ENCODE measurements at regions of chr17 and their contacts with region 1.

Region 1: GRCh38 chr17:64320613-64321553 is 57.8 kb upstream of the TEX2 start:
- DNase-seq: peak; percentile 65
- ATAC-seq: peak; percentile 83; the same call in 1 of the 2 replicates
- H3K4me3 ChIP-seq: no peak overlapping the region
- H3K27ac ChIP-seq: no peak overlapping the region
- H3K4me1 ChIP-seq: no peaks in the 10 kb centered on the region
- H3K27me3 ChIP-seq: peaks cover 44% of the 10 kb centered on the region
- CTCF ChIP-seq: peak; percentile 73
- POLR2A ChIP-seq: no peak
- RAD21 ChIP-seq: peak; percentile 78

Region 2: DNA sequence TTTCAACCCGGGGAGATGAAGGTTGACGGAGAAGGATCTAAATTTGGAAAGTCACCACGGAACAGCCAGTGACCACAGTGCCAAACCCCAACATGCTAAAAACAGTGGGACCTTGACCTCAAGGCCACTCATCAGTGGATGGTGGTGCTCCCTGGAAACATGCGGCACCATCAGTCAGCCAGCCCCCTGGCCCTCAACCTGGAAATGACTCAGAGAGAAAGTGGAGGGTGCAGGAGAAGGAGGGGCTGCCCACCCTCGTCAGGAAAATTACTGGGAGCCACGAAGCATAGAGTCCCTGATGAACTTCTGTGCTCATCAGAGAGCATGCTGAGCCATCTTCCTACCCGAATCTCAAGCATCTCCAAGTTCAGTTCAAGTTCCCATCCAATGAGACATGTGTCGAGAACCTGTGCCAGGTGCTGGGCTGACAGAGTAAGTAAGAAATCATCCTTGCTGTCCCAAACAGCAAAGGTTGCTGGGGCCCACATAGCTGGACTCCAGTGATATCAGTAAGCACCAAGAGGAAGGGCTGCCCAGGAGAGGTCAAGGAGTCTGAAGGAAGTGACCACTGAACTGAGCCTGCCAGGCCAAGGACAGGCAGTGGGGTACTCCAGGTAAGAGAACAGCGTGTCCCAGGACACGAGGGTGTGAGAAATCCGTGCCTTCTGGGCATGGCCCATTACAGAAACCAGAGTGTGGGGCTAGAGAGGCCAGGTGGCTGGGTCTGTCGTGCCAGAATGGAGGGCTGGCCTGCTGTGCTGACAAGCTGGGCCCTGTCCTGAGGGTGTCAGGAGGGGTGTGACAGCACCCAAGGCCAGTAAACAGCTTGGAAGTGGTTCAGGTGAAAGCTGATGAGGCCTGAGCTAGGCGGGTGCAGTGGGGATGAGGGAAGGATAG is 64.6 kb after region 1 on chr17:
- CTCF ChIA-PET with region 1: no interaction called
- POLR2A ChIA-PET with region 1: no interaction called
- dilution Hi-C with region 1: no loop called
- in situ Hi-C with region 1: no loop called
- intact Hi-C with region 1: no loop called
- DNase-seq: peak; percentile 88
- ATAC-seq: peak; percentile 87
- H3K4me3 ChIP-seq: no peak overlapping the region
- H3K27ac ChIP-seq: no peak overlapping the region; the same call in 1 of the 2 replicates
- H3K4me1 ChIP-seq: peaks cover 14% of the 10 kb centered on the region
- H3K27me3 ChIP-seq: peaks cover under 1% of the 10 kb centered on the region; the same call in 1 of the 2 replicates
- CTCF ChIP-seq: no peak
- POLR2A ChIP-seq: no peak
- RAD21 ChIP-seq: no peak

Region 3: DNA sequence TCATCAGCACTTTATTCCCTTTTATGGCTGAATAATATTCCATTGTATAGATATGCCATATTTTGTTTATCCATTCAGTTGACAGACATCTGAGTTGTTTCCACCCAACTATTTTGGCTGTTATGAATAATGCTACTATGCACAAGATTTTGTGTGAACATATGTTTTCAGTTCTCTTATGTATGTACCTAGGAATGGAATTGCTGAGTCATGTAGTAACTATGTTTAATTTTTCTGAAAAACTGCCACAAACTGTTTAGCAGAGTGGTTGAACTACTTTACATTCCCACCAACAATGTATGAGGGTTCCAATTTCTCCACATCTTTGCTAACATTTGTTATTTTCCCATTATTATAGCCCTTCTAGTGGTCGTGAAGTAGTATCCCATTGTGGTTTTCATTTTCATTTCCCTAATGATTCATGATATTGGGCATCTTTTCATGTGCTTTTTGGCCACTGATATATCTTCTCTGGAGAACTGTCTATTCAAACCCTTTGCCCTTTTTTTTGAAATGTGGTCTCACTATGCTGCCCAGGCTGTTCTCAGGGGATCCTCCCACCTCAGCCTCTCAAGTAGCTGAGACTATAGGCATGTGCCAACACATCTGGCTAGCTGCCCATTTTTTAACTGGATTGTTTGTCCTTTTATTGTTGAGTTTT is 314.9 kb after region 1 on chr17:
- CTCF ChIA-PET with region 1: no interaction called
- POLR2A ChIA-PET with region 1: no interaction called
- dilution Hi-C with region 1: no loop called
- in situ Hi-C with region 1: loop called (anchors 25 kb)
- intact Hi-C with region 1: no loop called
- DNase-seq: peak; percentile 88
- ATAC-seq: peak; percentile 28
- H3K4me3 ChIP-seq: no peak overlapping the region
- H3K27ac ChIP-seq: peak overlapping the region; percentile 78; the same call in 1 of the 2 replicates
- H3K4me1 ChIP-seq: peaks cover 17% of the 10 kb centered on the region
- H3K27me3 ChIP-seq: no peaks in the 10 kb centered on the region
- CTCF ChIP-seq: no peak
- POLR2A ChIP-seq: no peak
- RAD21 ChIP-seq: no peak

Measured in IMR-90 (cell line).